ENCODE measurements at regions of chr3 and their contacts with region 1.

Region 1: DNA sequence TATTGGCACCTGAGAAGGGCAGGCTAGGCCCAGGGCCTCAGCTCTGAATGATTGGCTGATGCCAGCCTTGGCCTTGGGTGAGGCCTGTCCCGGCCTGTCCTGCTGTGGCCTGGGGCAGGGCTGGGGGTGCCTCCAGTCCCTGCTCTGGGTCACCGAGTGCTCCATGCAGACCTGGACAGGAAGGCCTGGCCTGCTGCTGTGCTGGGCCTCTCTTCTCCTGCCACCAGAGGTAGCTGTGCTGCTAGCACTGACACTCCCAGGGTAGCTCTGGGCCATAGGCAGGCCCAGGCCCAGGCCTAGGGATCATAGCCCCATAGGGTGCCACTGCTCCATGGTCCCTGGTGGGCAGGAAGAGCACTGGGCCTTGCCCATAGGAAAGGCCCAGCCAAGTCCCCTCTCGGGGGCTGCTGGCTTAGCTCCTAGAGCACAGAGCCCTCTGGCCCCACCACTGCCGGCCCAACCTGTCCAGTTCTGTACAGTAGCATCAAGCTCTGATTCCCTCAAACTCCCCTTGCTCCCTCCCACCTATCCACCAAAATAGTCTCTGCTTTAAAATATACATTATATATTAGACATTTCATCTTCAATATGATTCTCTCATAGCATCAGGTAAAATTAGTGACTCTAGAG is 18.2 kb downstream of the ABTB1 start:
- DNase-seq: no peak
- H3K4me3 ChIP-seq: no peak overlapping the region
- H3K27ac ChIP-seq: peak overlapping the region; percentile 93
- H3K27me3 ChIP-seq: no peaks in the 10 kb centered on the region
- CTCF ChIP-seq: peak; percentile 77

Region 2: GRCh38 chr3:127589600-127590281 is 101.2 kb before region 1 on chr3:
- CTCF ChIA-PET with region 1: no interaction called
- POLR2A ChIA-PET with region 1: no interaction called
- DNase-seq: no peak
- H3K4me3 ChIP-seq: peak overlapping the region; percentile 81
- H3K27ac ChIP-seq: peak overlapping the region; percentile 73
- H3K27me3 ChIP-seq: no peaks in the 10 kb centered on the region
- CTCF ChIP-seq: no peak

Region 3: GRCh38 chr3:127658234-127658633 is 32.7 kb before region 1 on chr3:
- CTCF ChIA-PET with region 1: interaction called, 9 read pairs
- POLR2A ChIA-PET with region 1: interaction called, 11 read pairs
- DNase-seq: no peak
- H3K4me3 ChIP-seq: no peak overlapping the region
- H3K27ac ChIP-seq: no peak overlapping the region
- H3K27me3 ChIP-seq: no peaks in the 10 kb centered on the region
- CTCF ChIP-seq: no peak

Region 4: DNA sequence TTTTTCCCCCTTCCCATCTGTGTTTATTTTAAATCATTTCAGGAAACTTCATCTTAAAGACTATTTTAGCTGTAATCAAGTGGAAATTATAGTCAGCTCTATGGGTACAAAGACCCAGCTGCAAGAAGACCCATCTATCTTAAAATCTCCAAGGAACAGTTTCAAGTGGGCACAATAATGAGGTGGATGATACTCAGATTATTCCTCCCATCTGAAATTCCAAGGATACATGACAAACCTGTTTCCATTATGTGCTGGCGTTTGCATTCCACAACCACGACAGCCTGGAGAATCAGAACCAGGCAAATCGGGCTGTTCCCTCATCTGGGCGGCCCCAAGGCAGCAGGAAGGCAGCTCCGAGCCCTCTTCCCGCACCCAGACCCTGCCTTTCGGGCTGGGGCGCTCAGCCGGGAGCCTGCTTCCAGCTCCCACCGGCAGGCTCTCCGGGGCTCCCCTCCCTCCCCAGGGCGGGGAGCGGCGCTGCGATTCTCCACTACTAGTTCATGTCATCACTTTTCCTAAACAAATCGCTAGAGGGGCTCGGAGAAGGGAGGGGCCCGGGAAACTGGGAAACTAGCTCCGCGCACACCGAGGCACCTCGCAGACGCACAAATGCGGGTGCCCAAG is 131.2 kb after region 1 on chr3 and contains the start of gene MGLL:
- CTCF ChIA-PET with region 1: interaction called, 14 read pairs
- POLR2A ChIA-PET with region 1: no interaction called
- DNase-seq: no peak
- H3K4me3 ChIP-seq: peak within 1 kb of the TSS; percentile 77
- H3K27ac ChIP-seq: peak within 1 kb of the TSS; percentile 80
- H3K27me3 ChIP-seq: no peaks in the 10 kb centered on the region
- CTCF ChIP-seq: no peak
- polyA plus RNA-seq, gene MGLL: 49.1 and 51.5 TPM in 2 replicates

Region 5: GRCh38 chr3:127831723-127832172 is 140.8 kb after region 1 on chr3:
- CTCF ChIA-PET with region 1: interaction called, 20 read pairs
- POLR2A ChIA-PET with region 1: no interaction called
- DNase-seq: no peak
- H3K4me3 ChIP-seq: no peak overlapping the region
- H3K27ac ChIP-seq: no peak overlapping the region
- H3K27me3 ChIP-seq: no peaks in the 10 kb centered on the region
- CTCF ChIP-seq: peak; percentile 69

Region 6: GRCh38 chr3:127865941-127866340 is 175.0 kb after region 1 on chr3:
- CTCF ChIA-PET with region 1: no interaction called
- POLR2A ChIA-PET with region 1: no interaction called
- DNase-seq: no peak
- H3K4me3 ChIP-seq: no peak overlapping the region
- H3K27ac ChIP-seq: no peak overlapping the region
- H3K27me3 ChIP-seq: peaks cover 16% of the 10 kb centered on the region
- CTCF ChIP-seq: peak; percentile 21; the same call in 1 of the 2 replicates